ENCODE measurements at regions of chr5 and their contacts with region 1.

Region 1: DNA sequence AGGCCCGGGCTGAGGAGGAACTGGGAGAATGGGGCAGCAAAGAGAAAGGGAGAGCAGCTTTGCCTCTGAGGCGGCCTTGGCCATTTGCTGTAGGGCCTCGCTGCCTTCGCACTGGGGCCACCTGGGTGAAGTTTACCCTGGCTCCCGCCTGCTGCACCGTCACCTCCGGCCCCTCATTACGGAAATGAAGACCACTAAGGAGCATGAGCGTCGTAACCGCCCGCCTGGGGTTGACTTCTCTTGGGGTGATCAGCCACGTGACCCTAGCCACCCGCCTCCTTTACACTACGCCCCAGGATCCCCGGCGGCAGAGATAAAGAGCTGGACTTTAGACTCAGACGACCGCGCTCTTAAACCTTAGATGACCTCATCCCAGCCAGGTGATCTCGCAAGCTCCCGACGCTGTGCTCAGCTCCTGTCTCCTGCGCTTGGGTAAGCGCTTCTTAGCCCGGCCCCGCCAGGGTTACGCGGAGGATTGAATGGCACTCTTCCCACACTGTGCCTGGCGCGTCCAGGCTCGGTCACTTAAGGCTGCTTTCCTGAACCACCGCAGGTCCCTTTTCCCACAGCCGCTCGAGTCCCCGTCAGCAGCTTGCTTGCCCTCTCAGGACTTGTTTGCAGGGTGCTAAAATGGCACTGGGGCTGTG is 107.9 kb upstream of the LARP1 start:
- DNase-seq: peak; percentile 51 to 78
- ATAC-seq: peak; percentile 78
- H3K4me3 ChIP-seq: peak overlapping the region; percentile 2 to 33
- H3K27ac ChIP-seq: no peak overlapping the region
- H3K4me1 ChIP-seq: no peaks in the 10 kb centered on the region
- H3K27me3 ChIP-seq: no peaks in the 10 kb centered on the region

Region 2: DNA sequence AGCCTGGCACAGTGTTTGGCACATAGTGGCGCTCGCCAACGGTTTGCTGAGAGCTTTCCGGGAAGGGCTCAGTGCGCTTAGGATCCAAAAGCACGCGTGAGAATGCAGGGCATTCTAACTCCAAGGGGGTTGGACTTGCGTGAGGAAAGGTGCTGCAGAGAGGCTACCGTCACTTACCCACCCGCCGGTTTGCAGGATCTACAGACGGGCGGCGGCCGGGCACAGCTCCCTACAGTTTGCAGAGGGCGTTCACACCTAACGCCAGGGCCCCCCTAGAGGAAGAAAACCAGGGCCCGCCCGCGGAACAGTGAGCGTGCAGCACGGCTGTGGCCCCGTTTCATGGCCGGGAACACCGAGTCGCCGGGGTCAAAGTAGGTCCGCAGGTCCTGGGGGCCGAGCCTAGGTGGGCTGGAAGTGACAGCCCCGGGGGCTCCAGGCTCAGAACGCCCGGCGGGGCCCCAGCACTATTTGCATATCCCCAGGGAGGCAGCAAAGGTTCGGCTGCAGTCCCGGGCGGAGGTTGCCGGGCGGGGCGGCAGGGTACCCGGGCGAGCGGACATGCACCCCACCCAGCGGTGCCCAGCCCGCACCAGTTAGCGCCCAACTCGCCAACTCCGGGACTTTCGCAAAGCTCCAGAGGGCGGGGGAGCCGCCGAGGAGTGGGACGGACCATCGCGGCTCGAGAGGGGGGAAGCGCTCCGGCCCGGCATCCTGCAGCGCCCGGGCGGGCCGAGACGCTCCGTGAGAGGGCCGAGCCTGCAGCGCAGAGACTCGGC is 457.2 kb before region 1 on chr5:
- intact Hi-C with region 1: no loop called
- DNase-seq: peak; percentile 94
- ATAC-seq: peak; percentile 93
- H3K4me3 ChIP-seq: peak overlapping the region; percentile 53 to 69
- H3K27ac ChIP-seq: peak overlapping the region in 1 of 2 donors; percentile 58
- H3K4me1 ChIP-seq: peaks cover 0 to 3% of the 10 kb centered on the region in 2 donors
- H3K27me3 ChIP-seq: no peaks in the 10 kb centered on the region

Region 3: DNA sequence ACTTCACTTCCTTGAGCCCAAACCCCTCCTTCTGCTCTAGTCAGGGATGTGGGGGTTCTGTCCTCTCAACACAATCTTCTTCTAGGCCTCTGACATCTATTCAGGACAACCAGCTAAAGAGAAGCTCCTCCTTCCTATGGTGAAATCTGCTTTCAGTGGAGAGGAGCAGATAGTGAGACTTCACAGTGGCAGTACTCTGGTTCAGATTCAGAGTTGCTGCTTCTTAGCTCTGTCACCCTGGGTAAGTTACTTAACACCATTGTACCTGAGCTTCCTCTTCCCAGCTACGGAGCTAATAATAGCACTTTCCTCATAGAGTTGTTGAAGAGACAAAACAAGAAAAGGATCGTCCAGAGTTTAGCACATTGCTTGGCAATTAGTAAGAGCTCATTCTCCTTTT is 30.7 kb after region 1 on chr5:
- intact Hi-C with region 1: no loop called
- DNase-seq: no peak
- ATAC-seq: no peak
- H3K4me3 ChIP-seq: no peak overlapping the region
- H3K27ac ChIP-seq: no peak overlapping the region
- H3K4me1 ChIP-seq: no peaks in the 10 kb centered on the region
- H3K27me3 ChIP-seq: no peaks in the 10 kb centered on the region

Region 4: GRCh38 chr5:154811653-154812365 is 164.6 kb after region 1 on chr5:
- intact Hi-C with region 1: loop called (anchors 2 kb)
- DNase-seq: peak; percentile 65 to 86
- ATAC-seq: peak; percentile 80
- H3K4me3 ChIP-seq: no peak overlapping the region
- H3K27ac ChIP-seq: no peak overlapping the region
- H3K4me1 ChIP-seq: no peaks in the 10 kb centered on the region
- H3K27me3 ChIP-seq: no peaks in the 10 kb centered on the region

Region 5: DNA sequence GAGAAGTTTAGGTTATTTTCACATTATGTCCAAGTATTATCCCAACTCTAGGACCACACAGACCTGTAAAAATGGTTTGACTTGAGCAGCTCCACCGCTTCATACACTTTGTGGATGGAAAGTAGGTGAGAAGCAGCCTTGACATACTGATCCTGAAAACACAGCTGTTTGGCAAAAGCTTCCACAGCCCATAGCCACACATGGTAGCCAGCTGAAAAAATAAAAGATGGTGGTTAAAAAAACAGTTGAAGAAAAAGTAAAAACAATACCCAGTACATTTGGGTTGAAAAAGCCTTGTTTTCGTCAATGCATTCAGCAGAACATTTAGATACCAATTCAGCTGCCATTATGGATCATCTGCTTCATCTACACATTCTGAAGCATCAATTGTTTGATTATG is 254.0 kb after region 1 on chr5:
- intact Hi-C with region 1: loop called in 1 of 2 experiments (anchors 10 kb)
- DNase-seq: no peak
- ATAC-seq: no peak
- H3K4me3 ChIP-seq: no peak overlapping the region
- H3K27ac ChIP-seq: no peak overlapping the region
- H3K4me1 ChIP-seq: no peaks in the 10 kb centered on the region
- H3K27me3 ChIP-seq: no peaks in the 10 kb centered on the region

Measured in aorta (tissue), 5 donors.